ENCODE measurements at regions of chr4 and their contacts with region 1.

Region 1: DNA sequence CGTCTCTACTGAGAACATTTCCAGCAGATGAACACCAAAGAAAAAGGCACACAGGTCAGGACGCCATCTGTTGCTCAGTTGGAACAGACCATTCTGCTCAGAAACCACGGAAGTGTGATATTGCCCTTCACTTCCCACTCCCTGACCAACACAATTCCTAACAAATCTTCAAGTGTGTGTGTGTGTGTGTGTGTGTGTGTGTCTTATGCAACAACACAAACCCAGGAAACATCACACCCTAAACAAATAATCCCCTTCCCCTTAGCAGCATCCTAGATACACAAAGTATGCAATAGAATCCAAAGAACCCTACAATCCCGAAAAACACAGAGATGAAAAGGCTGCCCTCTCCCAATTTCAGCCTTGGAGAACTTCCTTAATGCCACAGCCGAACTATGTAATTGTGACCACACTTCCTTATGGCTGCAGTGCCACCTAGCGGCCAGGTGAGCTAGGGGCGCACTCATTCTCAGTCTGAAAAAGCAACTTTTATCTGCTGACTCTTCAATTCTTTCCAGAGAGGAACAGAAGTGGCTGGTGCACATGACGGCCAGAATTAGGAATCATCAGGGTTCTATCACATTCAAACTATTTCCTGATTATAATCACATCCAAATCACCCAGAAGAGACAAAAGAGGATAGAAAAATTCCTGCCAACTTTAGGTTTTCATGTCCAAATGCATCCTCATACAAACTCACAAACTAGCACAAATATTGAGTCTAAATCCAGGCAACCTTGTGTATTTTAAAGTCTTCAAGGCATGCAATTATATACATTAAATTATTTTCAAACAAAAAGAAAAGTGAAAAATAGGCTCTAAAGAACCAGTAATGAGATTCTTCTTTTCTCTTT is 164.9 kb downstream of the DHX15 start:
- DNase-seq: no peak
- H3K4me3 ChIP-seq: no peak overlapping the region
- H3K27ac ChIP-seq: no peak overlapping the region
- H3K4me1 ChIP-seq: peaks cover 0 to 8% (median 7%) of the 10 kb centered on the region in 4 donors
- H3K27me3 ChIP-seq: no peaks in the 10 kb centered on the region
- CTCF ChIP-seq: peak; percentile 87 to 91 (median 89)
- EP300 ChIP-seq: no peak
- POLR2A ChIP-seq: no peak

Region 2: GRCh38 chr4:23680671-23681518 is 738.5 kb before region 1 on chr4:
- intact Hi-C with region 1: loop called (anchors 10 kb)
- DNase-seq: no peak
- H3K4me3 ChIP-seq: no peak overlapping the region
- H3K27ac ChIP-seq: no peak overlapping the region
- H3K4me1 ChIP-seq: no peaks in the 10 kb centered on the region
- H3K27me3 ChIP-seq: no peaks in the 10 kb centered on the region
- CTCF ChIP-seq: peak; percentile 18 to 36 (median 23)
- EP300 ChIP-seq: no peak
- POLR2A ChIP-seq: no peak

Region 3: GRCh38 chr4:24249984-24250383 is 169.4 kb before region 1 on chr4:
- intact Hi-C with region 1: loop called (anchors 10 kb)
- DNase-seq: no peak
- H3K4me3 ChIP-seq: no peak overlapping the region
- H3K27ac ChIP-seq: peak overlapping the region in 1 of 4 donors; percentile 69
- H3K4me1 ChIP-seq: peaks cover 17 to 25% (median 20%) of the 10 kb centered on the region in 4 donors
- H3K27me3 ChIP-seq: no peaks in the 10 kb centered on the region
- CTCF ChIP-seq: no peak
- EP300 ChIP-seq: no peak
- POLR2A ChIP-seq: no peak